CD8-positive, alpha-beta memory T cell (primary cell): ENCODE measurements at regions of chr1 and their contacts with region 1.

Region 1: DNA sequence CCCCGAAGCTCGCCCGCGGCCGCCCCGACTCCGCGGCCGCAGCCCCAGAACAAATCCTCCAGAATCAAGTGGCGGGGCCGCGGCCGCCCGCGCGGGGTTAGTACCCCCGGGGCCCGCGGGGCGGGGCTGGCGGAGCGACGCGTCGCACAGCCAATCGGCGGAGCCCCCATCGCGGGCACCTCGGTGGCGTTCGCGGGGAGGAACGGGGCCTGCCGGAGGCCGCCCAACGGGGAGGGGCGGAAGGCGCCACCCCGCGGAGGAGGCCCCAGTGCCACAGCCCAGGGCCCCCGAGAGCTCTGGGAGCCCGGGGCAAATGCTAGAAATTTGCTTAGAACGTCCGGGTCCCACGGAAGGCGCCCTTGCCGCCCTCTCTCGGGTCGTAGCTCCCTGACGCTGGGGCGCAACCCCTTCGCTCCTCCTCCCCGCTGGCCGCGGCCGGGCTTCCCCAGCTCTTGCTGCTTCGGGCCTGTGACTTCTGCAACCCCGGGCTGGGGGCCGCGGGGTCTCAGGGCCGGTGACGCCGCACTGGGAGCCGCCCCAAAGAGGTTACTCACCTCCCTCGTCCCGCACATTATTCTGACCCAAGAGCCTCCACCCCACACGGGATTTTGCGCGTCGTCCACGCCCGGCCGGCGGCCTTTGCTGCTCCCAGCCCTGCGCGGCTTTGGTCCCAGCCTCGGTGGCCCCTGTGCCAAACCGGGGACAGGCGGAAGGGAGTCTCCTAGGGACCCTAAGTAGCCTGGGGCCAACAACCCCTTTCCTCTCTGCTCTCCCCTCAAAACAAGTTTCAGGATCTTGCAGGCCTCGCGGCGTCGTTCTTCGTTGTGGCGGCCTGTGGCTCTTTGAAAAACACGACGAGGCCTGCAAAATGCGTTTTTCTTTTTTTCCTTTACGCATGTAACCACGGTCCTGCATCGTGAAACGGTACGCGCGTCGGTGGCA is at the start of gene RUNX3:
- DNase-seq: peak; percentile 91 to 96 (median 95)
- H3K4me3 ChIP-seq: peak within 1 kb of the TSS; percentile 77
- H3K4me3 Mint-ChIP-seq: peak within 1 kb of the TSS; percentile 87 to 99 (median 97)
- H3K27ac ChIP-seq: peak within 1 kb of the TSS; percentile 89
- H3K27ac Mint-ChIP-seq: peak within 1 kb of the TSS; percentile 85 to 100 (median 100)
- H3K4me1 ChIP-seq: peaks cover 51% of the 10 kb centered on the region
- H3K4me1 Mint-ChIP-seq: peaks cover 34 to 69% (median 54%) of the 10 kb centered on the region in 3 donors
- H3K27me3 ChIP-seq: no peaks in the 10 kb centered on the region
- H3K27me3 Mint-ChIP-seq: peaks cover 0 to 10% of the 10 kb centered on the region in 2 donors
- total RNA-seq, gene RUNX3: 218 to 241 TPM

Region 2: GRCh38 chr1:24909388-24909898 is 21.0 kb before region 1 on chr1:
- CTCF ChIA-PET with region 1: interaction called, 171 read pairs
- POLR2A ChIA-PET with region 1: interaction called, 282 read pairs
- DNase-seq: no peak
- H3K4me3 ChIP-seq: no peak overlapping the region
- H3K4me3 Mint-ChIP-seq: peak overlapping the region; percentile 11 to 79 (median 53)
- H3K27ac ChIP-seq: peak overlapping the region; percentile 94
- H3K27ac Mint-ChIP-seq: peak overlapping the region; percentile 97 to 100 (median 100)
- H3K4me1 ChIP-seq: peaks cover 96% of the 10 kb centered on the region
- H3K4me1 Mint-ChIP-seq: peaks cover 66 to 96% (median 75%) of the 10 kb centered on the region in 3 donors
- H3K27me3 ChIP-seq: no peaks in the 10 kb centered on the region
- H3K27me3 Mint-ChIP-seq: peaks cover 0 to 4% of the 10 kb centered on the region in 2 donors

Region 3: DNA sequence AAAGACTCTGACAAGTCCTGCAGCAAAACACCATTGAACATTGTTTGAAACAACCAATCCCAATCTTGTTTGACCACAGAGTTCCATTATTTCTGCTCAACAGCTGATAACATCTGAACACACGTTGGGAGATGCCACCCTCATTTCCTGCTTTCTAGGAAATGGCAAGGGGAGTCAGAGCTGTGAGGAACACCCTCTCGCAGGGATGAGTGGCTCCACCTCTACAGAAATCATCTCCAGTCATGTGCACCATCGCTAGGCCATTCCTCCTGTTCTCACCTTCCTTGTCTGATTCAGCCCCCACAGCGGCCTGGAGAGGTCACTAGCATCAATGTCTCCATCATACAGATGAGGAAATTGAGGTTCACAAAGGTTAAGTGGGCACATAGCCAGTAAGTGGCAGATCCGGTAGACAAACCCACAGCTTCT is 22.0 kb after region 1 on chr1:
- CTCF ChIA-PET with region 1: interaction called, 23 read pairs
- POLR2A ChIA-PET with region 1: interaction called, 11 read pairs
- DNase-seq: peak in 3 of 5 donors; percentile 36 to 70 (median 65)
- H3K4me3 ChIP-seq: no peak overlapping the region
- H3K4me3 Mint-ChIP-seq: peak overlapping the region in 6 of 7 donors; percentile 42 to 78 (median 65)
- H3K27ac ChIP-seq: no peak overlapping the region
- H3K27ac Mint-ChIP-seq: peak overlapping the region; percentile 2 to 93 (median 78)
- H3K4me1 ChIP-seq: peaks cover 61% of the 10 kb centered on the region
- H3K4me1 Mint-ChIP-seq: peaks cover 71 to 95% (median 80%) of the 10 kb centered on the region in 3 donors
- H3K27me3 ChIP-seq: no peaks in the 10 kb centered on the region
- H3K27me3 Mint-ChIP-seq: peaks cover 0 to 2% of the 10 kb centered on the region in 2 donors

Region 4: GRCh38 chr1:25031966-25032667 is 101.6 kb after region 1 on chr1:
- CTCF ChIA-PET with region 1: interaction called, 234 read pairs
- POLR2A ChIA-PET with region 1: interaction called, 18 read pairs
- DNase-seq: peak; percentile 58 to 90 (median 78)
- H3K4me3 ChIP-seq: no peak overlapping the region
- H3K4me3 Mint-ChIP-seq: peak overlapping the region; percentile 56 to 93 (median 67)
- H3K27ac ChIP-seq: peak overlapping the region; percentile 14
- H3K27ac Mint-ChIP-seq: peak overlapping the region; percentile 91 to 99 (median 96)
- H3K4me1 ChIP-seq: peaks cover 93% of the 10 kb centered on the region
- H3K4me1 Mint-ChIP-seq: peaks cover 5 to 76% (median 62%) of the 10 kb centered on the region in 3 donors
- H3K27me3 ChIP-seq: no peaks in the 10 kb centered on the region
- H3K27me3 Mint-ChIP-seq: no peaks in the 10 kb centered on the region